HepG2 (cell line): ENCODE measurements at regions of chr20 and their contacts with region 1.

Region 1: GRCh38 chr20:45293041-45294002 is 13.3 kb upstream of the RBPJL start:
- DNase-seq: peak; percentile 50
- ATAC-seq: peak; percentile 87
- H3K4me3 ChIP-seq: peak overlapping the region in 2 of 3 experiments; percentile 37 to 60; a peak in 3 of 6 replicates
- H3K27ac ChIP-seq: no peak overlapping the region
- H3K4me1 ChIP-seq: peaks cover 16% of the 10 kb centered on the region; the same call in 1 of the 2 replicates
- H3K27me3 ChIP-seq: peaks cover 4 to 60% of the 10 kb centered on the region in 2 experiments; a peak in 4 of 5 replicates
- CTCF ChIP-seq: peak; percentile 91
- EP300 ChIP-seq: no peak
- POLR2A ChIP-seq: no peak
- RAD21 ChIP-seq: peak; percentile 24; the same call in 1 of the 2 replicates

Region 2: GRCh38 chr20:45011108-45011526 is 282.2 kb before region 1 on chr20:
- CTCF ChIA-PET with region 1: interaction called, 9 read pairs
- POLR2A ChIA-PET with region 1: no interaction called
- in situ Hi-C with region 1: loop called (anchors 10 kb)
- intact Hi-C with region 1: loop called (anchors 2 kb)
- DNase-seq: peak; percentile 49
- ATAC-seq: peak; percentile 87
- H3K4me3 ChIP-seq: no peak overlapping the region
- H3K27ac ChIP-seq: no peak overlapping the region
- H3K4me1 ChIP-seq: peaks cover 9% of the 10 kb centered on the region; the same call in 1 of the 2 replicates
- H3K27me3 ChIP-seq: no peaks in the 10 kb centered on the region
- CTCF ChIP-seq: peak; percentile 80
- EP300 ChIP-seq: no peak
- POLR2A ChIP-seq: no peak
- RAD21 ChIP-seq: peak; percentile 54; the same call in 1 of the 2 replicates

Region 3: GRCh38 chr20:45044084-45044573 is 249.2 kb before region 1 on chr20:
- CTCF ChIA-PET with region 1: interaction called, 18 read pairs
- POLR2A ChIA-PET with region 1: no interaction called
- in situ Hi-C with region 1: no loop called
- intact Hi-C with region 1: loop called (anchors 1 kb)
- DNase-seq: peak; percentile 82
- ATAC-seq: peak; percentile 84
- H3K4me3 ChIP-seq: no peak overlapping the region
- H3K27ac ChIP-seq: no peak overlapping the region
- H3K4me1 ChIP-seq: no peaks in the 10 kb centered on the region
- H3K27me3 ChIP-seq: no peaks in the 10 kb centered on the region; a peak in 1 of 5 replicates
- CTCF ChIP-seq: peak; percentile 95
- EP300 ChIP-seq: no peak
- POLR2A ChIP-seq: no peak
- RAD21 ChIP-seq: peak; percentile 84

Region 4: DNA sequence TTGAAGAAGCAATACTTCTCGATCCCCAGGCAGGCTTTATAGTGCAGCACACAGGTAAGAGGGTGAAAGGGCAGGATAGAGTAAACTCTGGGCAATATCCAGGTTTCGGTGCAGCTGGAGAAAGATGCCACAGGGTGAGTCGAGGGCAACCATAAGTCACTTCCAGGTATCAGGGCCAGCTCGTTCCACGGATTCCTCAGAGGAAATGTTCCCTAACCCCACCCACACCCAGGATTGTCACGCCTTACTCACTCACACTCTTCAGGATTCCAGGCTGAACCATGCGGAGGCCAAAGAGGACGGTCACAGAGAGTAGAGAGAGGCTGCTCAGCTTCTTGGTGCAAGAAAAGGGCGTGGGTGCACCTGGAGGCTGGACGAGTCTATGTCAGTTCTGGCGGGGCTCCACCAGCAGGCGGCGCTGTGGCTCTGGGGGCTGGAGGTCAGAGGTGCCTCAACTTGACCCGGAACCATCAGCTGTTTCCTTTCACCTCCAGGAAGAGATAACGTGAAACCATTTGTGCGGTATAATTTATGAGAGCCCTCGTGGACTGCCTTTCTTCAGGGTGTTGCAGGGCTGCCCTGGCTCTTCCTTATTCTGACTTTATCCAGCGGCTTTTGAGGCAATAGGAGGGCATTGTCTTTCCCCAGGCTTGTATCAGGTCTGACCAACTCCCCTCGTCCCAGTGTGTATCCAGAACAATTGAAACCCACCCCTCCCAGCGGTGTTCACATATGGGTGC is 154.6 kb before region 1 on chr20:
- CTCF ChIA-PET with region 1: interaction called, 8 read pairs
- POLR2A ChIA-PET with region 1: no interaction called
- in situ Hi-C with region 1: no loop called
- intact Hi-C with region 1: loop called (anchors 5 kb)
- DNase-seq: peak; percentile 34
- ATAC-seq: peak; percentile 91
- H3K4me3 ChIP-seq: no peak overlapping the region; a peak in 1 of 6 replicates
- H3K27ac ChIP-seq: no peak overlapping the region
- H3K4me1 ChIP-seq: peaks cover 8% of the 10 kb centered on the region
- H3K27me3 ChIP-seq: peaks cover 0 to 9% of the 10 kb centered on the region in 2 experiments; a peak in 4 of 5 replicates
- CTCF ChIP-seq: peak; percentile 85
- EP300 ChIP-seq: no peak
- POLR2A ChIP-seq: no peak
- RAD21 ChIP-seq: peak; percentile 74

Region 5: DNA sequence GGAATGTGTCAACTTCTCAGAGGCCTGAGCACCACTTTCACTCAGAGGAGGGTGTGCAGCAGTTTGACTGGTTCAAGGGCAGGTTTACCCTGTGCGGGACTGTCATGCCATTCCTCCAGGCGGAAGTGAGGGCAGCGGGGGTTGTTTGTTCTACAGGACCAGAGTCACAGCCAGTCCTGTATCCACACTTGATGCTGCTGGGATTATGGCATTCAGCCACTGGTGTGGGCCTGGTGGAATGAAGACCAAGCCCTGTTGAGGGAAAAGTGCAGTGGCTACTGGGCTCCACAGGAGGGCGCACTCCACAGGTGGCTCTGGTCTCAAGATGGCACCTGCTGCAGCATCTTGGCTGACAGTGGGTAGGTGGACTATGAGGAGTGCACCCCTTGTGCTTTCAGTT is 57.3 kb before region 1 on chr20:
- CTCF ChIA-PET with region 1: no interaction called
- POLR2A ChIA-PET with region 1: no interaction called
- in situ Hi-C with region 1: no loop called
- intact Hi-C with region 1: loop called (anchors 1 kb)
- DNase-seq: no peak
- ATAC-seq: peak; percentile 50; the same call in 2 of the 3 replicates
- H3K4me3 ChIP-seq: no peak overlapping the region
- H3K27ac ChIP-seq: no peak overlapping the region
- H3K4me1 ChIP-seq: no peaks in the 10 kb centered on the region
- H3K27me3 ChIP-seq: peaks cover 0 to 4% of the 10 kb centered on the region in 2 experiments; a peak in 1 of 5 replicates
- CTCF ChIP-seq: peak; percentile 57
- EP300 ChIP-seq: no peak
- POLR2A ChIP-seq: no peak
- RAD21 ChIP-seq: no peak

Region 6: DNA sequence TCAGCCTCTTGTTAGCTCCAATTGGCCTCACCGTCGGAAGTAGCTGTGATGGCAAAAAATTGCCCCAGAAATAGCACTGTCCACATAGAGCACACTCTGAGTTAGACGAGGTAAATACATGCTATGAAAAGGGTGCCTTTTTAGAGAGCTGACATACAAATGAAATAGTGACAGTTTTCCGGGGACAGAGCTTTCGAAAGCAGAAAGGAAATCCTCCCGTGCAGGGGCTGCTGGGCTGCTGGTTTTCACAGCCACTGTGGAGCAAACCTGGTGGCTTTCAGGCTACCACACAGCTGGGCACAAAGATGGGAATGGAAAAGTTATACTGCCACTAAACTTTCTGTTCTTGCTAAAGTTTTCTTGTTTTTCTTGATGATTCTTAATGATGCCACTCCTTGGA is 47.2 kb before region 1 on chr20:
- CTCF ChIA-PET with region 1: no interaction called
- POLR2A ChIA-PET with region 1: no interaction called
- in situ Hi-C with region 1: no loop called
- intact Hi-C with region 1: no loop called
- DNase-seq: no peak
- ATAC-seq: no peak
- H3K4me3 ChIP-seq: no peak overlapping the region
- H3K27ac ChIP-seq: no peak overlapping the region
- H3K4me1 ChIP-seq: no peaks in the 10 kb centered on the region
- H3K27me3 ChIP-seq: peaks cover 0 to 9% of the 10 kb centered on the region in 2 experiments; a peak in 2 of 5 replicates
- CTCF ChIP-seq: no peak
- EP300 ChIP-seq: no peak
- POLR2A ChIP-seq: no peak
- RAD21 ChIP-seq: no peak